ENCODE measurements at regions of chr15 and their contacts with region 1.

Region 1: DNA sequence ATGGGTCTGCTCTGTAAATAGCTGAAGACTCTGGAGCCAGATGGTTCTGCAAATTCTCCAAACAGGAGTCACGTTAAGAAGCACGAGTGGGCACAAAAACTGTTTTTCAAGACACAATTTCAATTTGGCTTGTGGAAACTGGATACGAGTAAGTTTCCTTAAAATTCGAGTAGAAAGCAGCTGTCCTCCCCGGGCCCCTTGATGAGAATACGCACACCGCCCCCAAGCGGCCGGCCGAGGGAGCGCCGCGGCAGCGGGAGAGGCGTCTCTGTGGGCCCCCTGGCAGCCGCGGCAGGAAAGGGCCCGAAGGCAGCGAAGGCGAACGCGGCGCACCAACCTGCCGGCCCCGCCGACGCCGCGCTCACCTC is 778 bp upstream of the THBS1 start:
- DNase-seq: peak; percentile 71 to 99
- H3K4me3 ChIP-seq: peak overlapping the region; percentile 58 to 81 (median 79)
- H3K27ac ChIP-seq: peak overlapping the region; percentile 87; the same call in 1 of the 2 replicates
- H3K4me1 ChIP-seq: peaks cover 9 to 24% (median 11%) of the 10 kb centered on the region in 4 experiments
- H3K27me3 ChIP-seq: peaks cover 0 to 5% (median 0%) of the 10 kb centered on the region in 4 experiments; a peak in 2 of 7 replicates
- CTCF ChIP-seq: peak; percentile 77 to 99 (median 79)
- EP300 ChIP-seq: no peak
- POLR2A ChIP-seq: peak; percentile 28 to 44; a peak in 2 of 3 replicates
- RAD21 ChIP-seq: peak; percentile 85 to 90

Region 2: GRCh38 chr15:38707802-38708671 is 872.1 kb before region 1 on chr15:
- CTCF ChIA-PET with region 1: interaction called, 18 read pairs
- POLR2A ChIA-PET with region 1: interaction called, 10 read pairs
- DNase-seq: peak in 1 of 2 experiments; percentile 51
- H3K4me3 ChIP-seq: peak overlapping the region in 1 of 4 experiments; percentile 34; a peak in 1 of 8 replicates
- H3K27ac ChIP-seq: no peak overlapping the region
- H3K4me1 ChIP-seq: peaks cover 0 to 13% (median 6%) of the 10 kb centered on the region in 4 experiments; a peak in 4 of 7 replicates
- H3K27me3 ChIP-seq: no peaks in the 10 kb centered on the region
- CTCF ChIP-seq: peak; percentile 38 to 82 (median 80)
- EP300 ChIP-seq: no peak
- POLR2A ChIP-seq: no peak
- RAD21 ChIP-seq: peak; percentile 92 to 94

Region 3: DNA sequence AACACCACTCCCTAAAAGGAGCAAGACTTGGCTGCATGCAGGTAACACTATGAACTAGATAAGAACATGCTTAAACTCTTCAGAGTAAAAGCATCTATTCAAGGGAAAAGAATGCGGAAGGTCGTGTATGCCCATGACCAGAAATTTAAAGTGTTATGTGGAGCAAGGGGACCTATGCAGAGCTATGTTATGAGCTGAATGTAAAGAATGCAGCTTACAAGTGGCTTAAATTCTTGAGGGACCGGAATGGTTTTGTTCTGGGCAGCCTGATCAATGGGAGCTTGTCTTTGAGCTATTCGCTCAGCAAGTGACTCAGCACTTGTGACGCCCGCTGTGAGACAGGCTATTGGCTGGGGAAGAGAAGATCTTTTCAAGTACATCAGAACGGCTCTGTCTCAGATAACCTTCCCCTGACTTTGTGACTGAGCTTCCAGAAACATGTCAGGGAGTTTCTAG is 366.7 kb before region 1 on chr15:
- CTCF ChIA-PET with region 1: interaction called, 3 read pairs
- POLR2A ChIA-PET with region 1: interaction called, 26 read pairs
- DNase-seq: peak; percentile 69 to 88
- H3K4me3 ChIP-seq: peak overlapping the region in 1 of 4 experiments; percentile 35; a peak in 1 of 8 replicates
- H3K27ac ChIP-seq: peak overlapping the region; percentile 84
- H3K4me1 ChIP-seq: peaks cover 2 to 4% (median 3%) of the 10 kb centered on the region in 4 experiments; a peak in 3 of 7 replicates
- H3K27me3 ChIP-seq: no peaks in the 10 kb centered on the region
- CTCF ChIP-seq: no peak
- EP300 ChIP-seq: peak in 1 of 2 experiments; percentile 89; a peak in 2 of 3 replicates
- POLR2A ChIP-seq: peak in 1 of 2 experiments; percentile 77; a peak in 1 of 3 replicates
- RAD21 ChIP-seq: peak in 1 of 2 experiments; percentile 10; a peak in 1 of 4 replicates

Region 4: GRCh38 chr15:39255760-39256159 is 324.3 kb before region 1 on chr15:
- CTCF ChIA-PET with region 1: no interaction called
- POLR2A ChIA-PET with region 1: no interaction called
- DNase-seq: no peak
- H3K4me3 ChIP-seq: no peak overlapping the region
- H3K27ac ChIP-seq: no peak overlapping the region
- H3K4me1 ChIP-seq: no peaks in the 10 kb centered on the region
- H3K27me3 ChIP-seq: no peaks in the 10 kb centered on the region
- CTCF ChIP-seq: no peak
- EP300 ChIP-seq: no peak
- POLR2A ChIP-seq: no peak
- RAD21 ChIP-seq: no peak

Region 5: DNA sequence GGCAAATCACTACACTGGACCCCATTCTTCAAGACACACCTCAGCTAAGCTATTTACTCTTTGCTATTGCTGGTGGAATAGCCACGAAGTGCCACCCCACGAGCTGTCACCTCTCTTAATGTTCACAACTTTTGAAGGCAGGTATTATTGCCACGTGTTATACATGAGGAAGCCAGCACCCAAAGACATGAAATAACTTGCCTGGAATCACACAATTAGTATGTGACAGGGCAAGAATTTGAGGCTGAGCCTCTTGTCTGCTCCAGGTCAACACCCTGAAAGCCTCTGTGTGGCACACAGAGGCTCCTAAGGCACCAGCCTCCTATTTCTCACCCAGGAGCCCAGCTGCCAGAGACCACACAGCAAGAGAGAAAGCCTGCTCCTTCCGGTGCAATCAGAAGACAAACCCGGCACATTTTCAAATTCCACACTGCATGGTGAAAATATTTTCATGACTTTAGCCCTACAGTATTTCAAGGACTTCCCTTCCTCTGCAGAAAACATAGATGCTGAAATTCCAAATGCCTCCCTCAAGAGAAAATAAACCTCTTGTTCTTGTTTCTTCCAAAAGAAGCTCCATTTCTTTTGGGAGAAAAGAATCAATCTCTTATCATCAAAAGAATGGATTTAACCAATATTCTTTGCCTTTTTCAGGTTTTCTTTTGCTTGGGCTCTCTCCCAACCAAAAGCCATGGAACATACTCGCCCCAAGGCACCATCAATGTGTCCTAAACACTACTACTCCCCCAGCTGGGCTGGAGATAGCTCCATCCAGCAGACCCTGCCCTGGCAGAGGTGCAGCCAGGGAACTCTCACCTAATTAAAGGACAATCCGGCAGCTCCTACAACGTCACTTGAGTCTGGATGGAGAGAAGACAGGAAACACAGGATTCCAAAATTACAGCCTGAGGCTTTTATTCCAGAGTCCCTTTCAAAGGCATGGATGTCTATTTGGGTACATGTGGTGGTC is 83.9 kb before region 1 on chr15:
- CTCF ChIA-PET with region 1: interaction called, 5 read pairs
- POLR2A ChIA-PET with region 1: interaction called, 17 read pairs
- DNase-seq: no peak
- H3K4me3 ChIP-seq: no peak overlapping the region
- H3K27ac ChIP-seq: no peak overlapping the region
- H3K4me1 ChIP-seq: no peaks in the 10 kb centered on the region
- H3K27me3 ChIP-seq: peaks cover 0 to 1% (median 0%) of the 10 kb centered on the region in 4 experiments; a peak in 1 of 7 replicates
- CTCF ChIP-seq: no peak
- EP300 ChIP-seq: no peak
- POLR2A ChIP-seq: no peak
- RAD21 ChIP-seq: no peak

Region 6: DNA sequence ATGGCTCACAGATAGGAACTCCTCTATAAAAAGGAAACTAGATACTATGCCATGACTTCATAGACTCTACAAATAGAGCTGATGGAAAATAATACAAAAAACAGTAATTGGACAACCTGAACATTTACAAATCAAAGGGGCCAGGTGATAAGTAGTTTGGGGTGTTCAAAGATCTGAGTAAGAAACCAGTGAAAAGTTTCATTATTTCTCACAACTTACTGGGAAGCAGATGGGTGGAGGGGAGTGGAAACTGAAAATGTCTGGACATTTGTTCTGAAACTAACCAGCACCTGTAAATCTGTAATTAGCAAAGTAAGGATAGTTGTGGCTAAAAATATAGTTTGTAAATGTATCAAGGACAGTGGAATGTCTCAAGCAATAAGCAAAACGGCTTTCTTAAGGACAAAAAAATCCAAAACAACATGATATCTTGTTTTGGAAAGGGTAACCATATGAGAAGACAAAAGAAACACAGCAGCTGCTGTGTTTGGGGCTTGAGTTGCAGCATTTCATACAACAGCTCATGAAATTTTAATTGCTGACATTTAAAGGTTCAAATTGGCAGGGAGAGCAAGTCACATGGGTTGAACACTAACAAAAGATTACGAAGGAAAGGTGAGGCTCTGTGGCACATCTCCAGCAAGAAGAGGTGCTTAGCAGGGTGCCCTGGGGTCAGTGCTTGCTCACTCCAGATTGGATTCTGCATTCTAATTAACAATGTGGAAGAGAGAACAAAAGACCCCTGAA is 26.0 kb before region 1 on chr15:
- CTCF ChIA-PET with region 1: interaction called, 5 read pairs
- POLR2A ChIA-PET with region 1: interaction called, 13 read pairs
- DNase-seq: no peak
- H3K4me3 ChIP-seq: no peak overlapping the region
- H3K27ac ChIP-seq: no peak overlapping the region
- H3K4me1 ChIP-seq: peaks cover 0 to 5% (median 0%) of the 10 kb centered on the region in 4 experiments; a peak in 1 of 7 replicates
- H3K27me3 ChIP-seq: no peaks in the 10 kb centered on the region
- CTCF ChIP-seq: no peak
- EP300 ChIP-seq: no peak
- POLR2A ChIP-seq: no peak
- RAD21 ChIP-seq: no peak

Region 7: DNA sequence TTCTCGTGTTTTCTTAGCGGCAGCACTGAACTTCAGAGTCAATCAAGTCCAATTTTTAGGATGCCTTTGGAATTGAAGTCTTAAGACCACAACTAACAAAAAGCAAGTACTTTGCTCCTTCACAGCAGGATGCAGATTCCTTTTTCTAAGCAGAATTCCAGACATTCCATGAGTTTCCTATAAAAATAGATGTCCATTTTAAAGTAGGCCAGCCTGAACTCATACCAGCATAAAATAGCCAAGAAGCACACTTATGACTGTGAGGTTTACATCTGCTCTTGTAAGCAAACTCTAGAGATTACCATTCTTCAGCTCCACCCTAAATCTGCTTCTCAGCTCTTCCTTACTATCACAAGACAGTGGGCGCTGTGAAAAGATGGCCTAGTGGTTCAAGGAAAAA is 86.6 kb after region 1 on chr15:
- CTCF ChIA-PET with region 1: no interaction called
- POLR2A ChIA-PET with region 1: interaction called, 13 read pairs
- DNase-seq: no peak
- H3K4me3 ChIP-seq: peak overlapping the region in 1 of 4 experiments; percentile 23; a peak in 1 of 8 replicates
- H3K27ac ChIP-seq: no peak overlapping the region
- H3K4me1 ChIP-seq: peaks cover 4 to 15% (median 10%) of the 10 kb centered on the region in 4 experiments; a peak in 6 of 7 replicates
- H3K27me3 ChIP-seq: no peaks in the 10 kb centered on the region
- CTCF ChIP-seq: no peak
- EP300 ChIP-seq: no peak
- POLR2A ChIP-seq: no peak
- RAD21 ChIP-seq: no peak

Measured in H1 (cell line).